Activated T-helper 2 cell treated with anti-CD3 and anti-CD28 coated beads, Interferon-gamma antibody, Interleukin-2, Interleukin-4, amounts not matched to agents 10 μg/mL and 5 μg/mL and 100 μg/mL, durations not matched to agents 14 hours and 24 hours and 36 hours (primary cell): ENCODE measurements at regions of chr14 and their contacts with region 1.

Region 1: GRCh38 chr14:54566410-54567223 is at the start of gene SAMD4A:
- DNase-seq: peak; percentile 43
- H3K4me3 Mint-ChIP-seq: peak within 1 kb of the TSS; percentile 91
- H3K27ac Mint-ChIP-seq: peak within 1 kb of the TSS; percentile 84
- H3K4me1 Mint-ChIP-seq: peaks cover 17% of the 10 kb centered on the region
- H3K27me3 Mint-ChIP-seq: peaks cover 25% of the 10 kb centered on the region
- total RNA-seq, gene SAMD4A: 4.3 and 5.1 TPM in 2 replicates

Region 2: DNA sequence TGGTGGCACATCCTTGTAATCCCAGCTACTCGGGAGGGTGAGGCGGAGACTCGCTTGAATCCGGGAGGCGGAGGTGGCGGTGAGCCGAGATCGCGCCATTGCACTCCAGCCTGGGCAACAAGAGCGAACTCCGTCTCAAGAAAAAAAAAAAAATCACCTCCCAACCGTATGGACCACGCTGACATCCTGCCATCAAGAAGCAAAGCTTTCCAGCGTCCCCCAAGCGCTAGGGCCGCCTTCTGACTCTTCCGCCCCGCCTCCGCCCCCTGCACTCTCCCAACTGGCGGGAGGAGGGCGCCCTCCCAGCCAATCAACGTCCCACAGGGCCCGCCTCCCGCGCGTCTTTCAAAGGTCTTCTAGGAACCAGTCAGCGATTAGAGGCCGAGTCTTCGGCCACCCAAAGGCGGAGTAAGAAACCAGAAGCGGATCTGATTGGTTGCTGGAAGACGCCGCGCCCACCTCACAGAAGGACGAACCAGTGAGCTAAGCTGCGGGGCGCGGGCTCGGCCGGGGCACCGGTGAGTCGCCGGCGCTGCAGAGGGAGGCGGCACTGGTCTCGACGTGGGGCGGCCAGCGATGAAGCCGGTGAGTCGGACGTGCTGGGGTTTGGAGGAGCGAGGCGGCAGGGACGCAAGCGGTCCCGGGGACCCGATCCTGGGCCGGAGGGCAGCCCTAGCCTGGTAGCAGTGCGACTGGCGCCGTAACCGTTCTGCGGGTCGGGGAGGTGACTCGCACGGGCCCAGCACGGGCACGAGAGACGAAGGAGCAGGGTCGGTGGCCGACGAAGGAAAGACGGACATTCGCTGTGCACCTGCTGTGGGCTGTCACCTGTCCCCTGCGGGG is 169.9 kb before region 1 on chr14 and contains the start of gene CDKN3:
- intact Hi-C with region 1: loop called (anchors 1 kb)
- DNase-seq: peak; percentile 98
- H3K4me3 Mint-ChIP-seq: peak within 1 kb of the TSS; percentile 87
- H3K27ac Mint-ChIP-seq: peak within 1 kb of the TSS; percentile 81
- H3K4me1 Mint-ChIP-seq: peaks cover 26% of the 10 kb centered on the region
- H3K27me3 Mint-ChIP-seq: no peaks in the 10 kb centered on the region
- total RNA-seq, gene CDKN3: 53.4 and 57.5 TPM in 2 replicates

Region 3: GRCh38 chr14:54450535-54450934 is 116.1 kb before region 1 on chr14:
- intact Hi-C with region 1: no loop called
- DNase-seq: no peak
- H3K4me3 Mint-ChIP-seq: no peak overlapping the region
- H3K27ac Mint-ChIP-seq: no peak overlapping the region
- H3K4me1 Mint-ChIP-seq: peaks cover 29% of the 10 kb centered on the region
- H3K27me3 Mint-ChIP-seq: peaks cover 6% of the 10 kb centered on the region

Region 4: DNA sequence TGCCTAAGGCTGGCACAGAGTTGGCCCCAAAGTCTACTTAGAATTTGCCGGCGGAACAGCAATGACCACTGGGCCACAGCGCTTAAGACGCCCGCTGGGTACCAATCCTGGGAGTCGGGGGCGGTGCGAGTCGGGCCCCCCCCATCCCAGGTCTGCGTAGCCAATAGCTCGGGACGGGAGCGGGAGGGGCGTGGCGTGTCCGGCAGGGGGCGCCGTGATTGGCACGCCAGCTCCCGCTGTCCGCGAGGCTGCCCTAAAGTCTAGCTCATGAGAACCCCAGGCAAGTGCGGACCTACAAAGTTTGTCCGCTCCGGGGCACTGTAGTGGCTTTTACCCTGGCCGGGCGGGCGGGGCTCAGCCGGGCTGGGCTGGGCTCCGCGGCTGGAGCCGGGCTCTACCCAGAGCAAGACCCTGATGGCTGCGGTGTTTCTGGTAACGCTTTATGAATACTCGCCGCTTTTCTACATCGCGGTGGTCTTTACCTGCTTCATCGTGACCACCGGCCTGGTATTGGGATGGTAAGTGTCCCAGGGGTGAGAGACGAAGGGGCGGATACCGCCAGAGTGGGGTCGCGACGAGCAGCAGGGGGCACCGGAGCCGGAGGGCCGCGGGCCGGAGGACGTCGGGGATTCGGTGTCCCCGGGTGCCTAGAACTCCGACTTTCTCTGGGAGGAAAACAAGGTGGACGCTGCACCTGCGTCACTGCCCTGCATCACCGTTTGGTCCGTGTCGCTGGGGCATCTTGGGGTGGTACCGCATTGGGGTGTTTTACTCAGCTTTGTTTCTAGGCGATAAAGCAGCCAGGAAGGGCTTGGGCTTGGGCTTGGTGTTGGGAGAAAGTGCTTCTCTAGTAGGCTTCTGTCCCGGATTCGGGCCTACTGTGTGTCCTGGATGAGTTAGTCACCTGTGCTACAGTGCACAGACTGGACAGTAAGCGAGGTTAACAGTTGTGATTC is 56.8 kb before region 1 on chr14 and contains the start of gene CGRRF1:
- intact Hi-C with region 1: loop called (anchors 2 kb)
- DNase-seq: peak; percentile 94
- H3K4me3 Mint-ChIP-seq: peak within 1 kb of the TSS; percentile 88
- H3K27ac Mint-ChIP-seq: peak within 1 kb of the TSS; percentile 67
- H3K4me1 Mint-ChIP-seq: peaks cover 25% of the 10 kb centered on the region
- H3K27me3 Mint-ChIP-seq: peaks cover 6% of the 10 kb centered on the region
- total RNA-seq, gene CGRRF1: 6.2 and 9.1 TPM in 2 replicates

Region 5: GRCh38 chr14:54579621-54580020 is 13.0 kb after region 1 on chr14:
- intact Hi-C with region 1: no loop called
- DNase-seq: no peak
- H3K4me3 Mint-ChIP-seq: no peak overlapping the region
- H3K27ac Mint-ChIP-seq: no peak overlapping the region
- H3K4me1 Mint-ChIP-seq: no peaks in the 10 kb centered on the region
- H3K27me3 Mint-ChIP-seq: peaks cover 11% of the 10 kb centered on the region

Region 6: DNA sequence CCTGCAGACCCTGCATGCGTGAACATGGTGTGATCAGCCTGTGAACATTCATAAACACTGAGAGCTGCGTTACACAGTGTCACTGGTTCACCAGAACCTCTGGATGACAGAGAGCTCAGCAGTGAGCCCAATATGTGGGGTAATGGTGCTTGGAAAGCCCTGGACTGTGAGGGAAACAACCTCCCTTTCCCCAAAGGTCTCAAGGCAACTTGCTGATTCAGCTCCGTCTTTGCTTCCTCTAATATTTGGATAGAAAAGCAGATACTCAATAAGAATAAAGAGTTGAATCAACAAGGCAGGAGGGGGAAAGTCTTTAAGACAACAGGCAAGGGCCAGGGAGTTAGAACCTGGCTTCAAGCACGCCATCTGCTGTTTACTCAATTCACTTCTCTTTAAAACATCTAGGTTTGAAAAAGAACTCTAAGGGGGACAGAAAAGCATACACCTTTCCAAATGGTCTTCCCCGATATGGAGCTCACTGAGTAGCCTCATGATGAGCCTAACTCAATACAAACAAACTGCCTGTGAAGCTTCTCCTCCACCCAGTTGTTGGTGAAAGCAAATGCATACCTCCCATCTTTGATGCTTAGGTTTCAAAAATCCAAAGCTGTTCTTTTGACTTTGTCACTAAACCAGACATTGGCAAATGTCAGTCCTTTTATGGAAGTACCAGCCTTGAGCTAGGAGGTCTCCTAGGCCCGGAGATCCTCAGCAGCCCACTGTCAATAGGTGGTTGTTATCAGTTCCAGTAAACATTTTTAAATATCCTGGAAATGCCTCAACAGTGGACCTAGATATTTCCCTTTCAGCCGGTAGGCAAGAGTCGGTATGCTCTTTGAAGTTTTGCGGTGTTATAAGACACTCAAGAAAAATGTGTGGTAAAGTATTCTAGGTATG is 76.4 kb after region 1 on chr14:
- intact Hi-C with region 1: loop called (anchors 5 kb)
- DNase-seq: no peak
- H3K4me3 Mint-ChIP-seq: no peak overlapping the region
- H3K27ac Mint-ChIP-seq: no peak overlapping the region
- H3K4me1 Mint-ChIP-seq: peaks cover 13% of the 10 kb centered on the region
- H3K27me3 Mint-ChIP-seq: peaks cover 19% of the 10 kb centered on the region

Region 7: GRCh38 chr14:54691525-54692283 is 125.1 kb after region 1 on chr14:
- intact Hi-C with region 1: loop called (anchors 2 kb)
- DNase-seq: peak; percentile 24
- H3K4me3 Mint-ChIP-seq: no peak overlapping the region
- H3K27ac Mint-ChIP-seq: no peak overlapping the region
- H3K4me1 Mint-ChIP-seq: peaks cover 14% of the 10 kb centered on the region
- H3K27me3 Mint-ChIP-seq: peaks cover 30% of the 10 kb centered on the region

Region 8: DNA sequence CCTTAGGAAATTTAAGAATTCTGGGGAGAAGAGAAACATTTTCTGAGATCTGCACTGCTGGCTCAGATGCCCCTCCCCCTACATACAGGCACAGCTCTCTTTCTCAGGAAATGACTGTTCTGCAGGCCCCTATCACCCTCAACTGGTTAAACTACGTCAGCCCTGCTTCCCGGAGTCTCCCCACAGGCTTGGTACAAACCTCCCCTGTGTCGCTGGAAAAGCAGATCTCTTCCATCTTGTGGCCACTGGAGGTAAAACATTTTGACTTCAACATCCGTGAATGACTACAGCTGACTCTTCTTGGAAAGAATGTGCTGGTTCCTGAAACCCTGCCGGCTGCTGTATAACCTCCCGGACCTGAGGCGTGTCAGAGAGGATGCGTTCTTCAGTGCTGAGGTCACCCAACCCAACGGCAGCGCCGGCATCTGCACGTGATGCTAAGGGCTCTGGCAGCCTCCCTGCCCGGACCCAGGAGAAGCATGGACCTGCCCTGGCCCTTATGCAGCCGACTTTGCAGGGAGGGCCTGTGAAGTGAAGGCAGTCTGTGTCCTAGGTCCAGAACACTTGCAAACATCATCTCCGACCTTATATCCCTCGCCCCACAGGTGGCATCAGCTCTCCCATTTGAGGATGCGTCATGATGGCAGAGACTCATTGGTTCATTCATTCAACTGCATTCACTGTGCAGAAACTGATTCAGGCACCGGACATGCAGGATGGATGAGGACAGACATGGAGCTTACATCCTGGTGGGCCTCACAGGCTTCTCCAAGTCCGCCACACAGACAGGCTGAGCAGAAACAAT is 206.8 kb after region 1 on chr14:
- intact Hi-C with region 1: loop called (anchors 1 kb)
- DNase-seq: peak; percentile 77
- H3K4me3 Mint-ChIP-seq: peak overlapping the region; percentile 35
- H3K27ac Mint-ChIP-seq: peak overlapping the region; percentile 76
- H3K4me1 Mint-ChIP-seq: peaks cover 51% of the 10 kb centered on the region
- H3K27me3 Mint-ChIP-seq: peaks cover 32% of the 10 kb centered on the region

Region 9: GRCh38 chr14:54893151-54893760 is 326.6 kb after region 1 on chr14:
- intact Hi-C with region 1: loop called (anchors 5 kb)
- DNase-seq: no peak
- H3K4me3 Mint-ChIP-seq: no peak overlapping the region
- H3K27ac Mint-ChIP-seq: no peak overlapping the region
- H3K4me1 Mint-ChIP-seq: peaks cover 46% of the 10 kb centered on the region
- H3K27me3 Mint-ChIP-seq: no peaks in the 10 kb centered on the region